Naive thymus-derived CD4-positive, alpha-beta T cell (primary cell): ENCODE measurements at regions of chr16 and their contacts with region 1.

Region 1: DNA sequence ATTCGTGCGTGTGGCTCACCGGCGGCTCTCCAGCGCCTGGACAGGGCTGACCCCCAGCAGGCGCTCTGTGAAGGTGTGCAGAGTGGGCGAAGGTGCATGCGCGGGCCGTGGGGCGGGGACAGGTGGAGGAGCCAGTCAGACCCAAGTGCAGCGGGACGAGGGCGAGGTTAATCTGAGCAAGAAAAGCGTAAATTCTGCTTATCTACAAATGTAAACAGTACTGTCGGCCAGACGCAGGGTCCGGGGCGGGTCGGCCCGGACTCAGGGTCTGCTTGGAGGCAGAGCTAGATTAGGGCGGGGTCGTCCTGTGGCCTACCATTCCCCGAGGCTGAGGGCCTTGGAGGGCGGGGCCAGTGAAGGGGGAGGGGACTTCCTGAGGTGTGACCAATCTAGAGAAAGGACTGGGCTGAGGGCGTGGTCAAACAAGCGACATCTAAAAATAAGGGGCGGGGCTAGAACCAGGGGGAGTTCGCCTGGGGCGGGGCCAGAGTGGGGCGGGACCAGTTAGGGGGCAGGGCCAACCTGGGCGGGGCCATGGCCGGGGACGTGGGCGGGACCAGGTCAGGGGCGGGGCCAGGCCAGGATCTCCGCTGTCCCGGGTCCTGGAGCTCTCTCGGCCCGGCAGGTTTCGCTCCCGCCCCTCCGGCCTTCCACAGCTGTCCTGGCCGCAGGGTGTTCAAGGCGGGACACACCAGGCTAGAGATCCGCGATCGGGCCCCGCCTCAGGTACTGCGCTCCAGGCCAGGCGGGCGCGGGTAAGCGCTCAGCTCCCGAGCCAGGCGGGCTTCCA is at the start of gene SEC14L5:
- DNase-seq: peak; percentile 87 to 96 (median 89)
- ATAC-seq: peak; percentile 99
- H3K4me3 ChIP-seq: peak within 1 kb of the TSS; percentile 59
- H3K4me3 Mint-ChIP-seq: peak within 1 kb of the TSS; percentile 79 to 96 (median 89)
- H3K27ac ChIP-seq: peak within 1 kb of the TSS; percentile 26
- H3K27ac Mint-ChIP-seq: peak within 1 kb of the TSS in 6 of 9 donors; percentile 30 to 80 (median 53)
- H3K4me1 ChIP-seq: peaks cover 6 to 13% of the 10 kb centered on the region in 2 donors
- H3K4me1 Mint-ChIP-seq: peaks cover 15 to 30% (median 23%) of the 10 kb centered on the region in 7 donors
- H3K27me3 ChIP-seq: peaks cover 0 to 7% of the 10 kb centered on the region in 2 donors
- H3K27me3 Mint-ChIP-seq: peaks cover 10 to 35% (median 31%) of the 10 kb centered on the region in 5 donors
- total RNA-seq, gene SEC14L5: 0.21 to 1.0 TPM in 2 of 5 experiments, not detected in the others

Region 2: GRCh38 chr16:4307215-4308037 is 650.5 kb before region 1 on chr16:
- CTCF ChIA-PET with region 1: interaction called, 3 read pairs
- POLR2A ChIA-PET with region 1: no interaction called
- intact Hi-C with region 1: loop called (anchors 5 kb)
- DNase-seq: peak; percentile 97 to 98 (median 97)
- ATAC-seq: peak; percentile 96
- H3K4me3 ChIP-seq: peak overlapping the region; percentile 94
- H3K4me3 Mint-ChIP-seq: peak overlapping the region; percentile 90 to 98 (median 94)
- H3K27ac ChIP-seq: peak overlapping the region; percentile 90
- H3K27ac Mint-ChIP-seq: peak overlapping the region; percentile 94 to 99 (median 95)
- H3K4me1 ChIP-seq: peaks cover 15 to 17% of the 10 kb centered on the region in 2 donors
- H3K4me1 Mint-ChIP-seq: peaks cover 13 to 30% (median 23%) of the 10 kb centered on the region in 7 donors
- H3K27me3 ChIP-seq: no peaks in the 10 kb centered on the region
- H3K27me3 Mint-ChIP-seq: peaks cover 0 to 2% (median 0%) of the 10 kb centered on the region in 5 donors

Region 3: GRCh38 chr16:4425378-4426020 is 532.4 kb before region 1 on chr16 and contains the start of gene DNAJA3:
- CTCF ChIA-PET with region 1: no interaction called
- POLR2A ChIA-PET with region 1: no interaction called
- intact Hi-C with region 1: loop called in 1 of 2 experiments (anchors 10 kb)
- DNase-seq: peak; percentile 91 to 97 (median 95)
- ATAC-seq: peak; percentile 93
- H3K4me3 ChIP-seq: peak within 1 kb of the TSS; percentile 97
- H3K4me3 Mint-ChIP-seq: peak within 1 kb of the TSS; percentile 92 to 99 (median 98)
- H3K27ac ChIP-seq: peak within 1 kb of the TSS; percentile 95
- H3K27ac Mint-ChIP-seq: peak within 1 kb of the TSS; percentile 99 to 100 (median 100)
- H3K4me1 ChIP-seq: peaks cover 18% of the 10 kb centered on the region in 2 donors
- H3K4me1 Mint-ChIP-seq: peaks cover 26 to 37% (median 31%) of the 10 kb centered on the region in 7 donors
- H3K27me3 ChIP-seq: no peaks in the 10 kb centered on the region
- H3K27me3 Mint-ChIP-seq: peaks cover 0 to 4% (median 0%) of the 10 kb centered on the region in 5 donors
- total RNA-seq, gene DNAJA3: 33.6 to 79.8 (median 70.5) TPM

Region 4: DNA sequence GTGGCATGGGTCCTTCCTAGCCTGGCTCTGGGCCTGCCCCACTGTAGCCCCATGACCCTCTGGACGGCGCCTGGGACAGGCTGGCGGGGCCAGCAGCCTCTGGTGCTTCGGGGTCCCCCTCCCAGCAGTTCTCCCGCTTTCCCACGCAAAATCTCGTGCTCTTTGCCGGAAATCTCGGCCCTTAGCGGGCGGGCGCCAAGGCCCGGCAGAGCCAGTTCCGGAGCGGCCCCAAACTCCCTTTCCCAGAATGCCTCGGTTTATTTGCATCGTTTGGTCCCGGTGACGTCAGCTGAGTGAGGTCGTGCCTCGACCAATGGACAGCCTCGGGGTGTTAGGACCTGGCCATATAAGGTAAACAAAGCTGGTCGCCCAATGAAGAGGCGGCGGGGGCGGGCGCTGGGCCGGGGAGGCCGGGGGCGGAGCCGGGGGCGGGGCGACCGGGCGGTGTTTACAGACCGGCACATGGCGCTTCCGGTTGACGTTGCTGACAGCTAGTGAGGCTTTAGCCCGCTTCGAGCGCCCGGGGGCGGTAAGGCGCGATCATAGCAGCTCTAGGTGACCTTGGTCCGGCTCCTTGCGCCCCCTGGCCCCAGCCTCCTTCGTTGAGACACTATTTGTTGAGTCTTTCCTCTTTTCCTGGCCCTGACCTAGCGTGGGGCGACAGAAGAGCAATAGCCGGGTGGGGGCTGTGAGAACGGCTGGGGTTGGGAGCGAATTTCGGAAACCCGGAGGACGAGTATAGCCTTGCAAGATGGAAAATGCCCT is 341.7 kb before region 1 on chr16:
- CTCF ChIA-PET with region 1: interaction called, 3 read pairs
- POLR2A ChIA-PET with region 1: no interaction called
- intact Hi-C with region 1: loop called in 1 of 2 experiments (anchors 1 kb)
- DNase-seq: peak; percentile 93 to 100 (median 98)
- ATAC-seq: peak; percentile 94
- H3K4me3 ChIP-seq: peak overlapping the region; percentile 95
- H3K4me3 Mint-ChIP-seq: peak overlapping the region; percentile 94 to 99 (median 98)
- H3K27ac ChIP-seq: peak overlapping the region; percentile 98
- H3K27ac Mint-ChIP-seq: peak overlapping the region; percentile 96 to 100 (median 99)
- H3K4me1 ChIP-seq: peaks cover 28 to 37% of the 10 kb centered on the region in 2 donors
- H3K4me1 Mint-ChIP-seq: peaks cover 8 to 43% (median 24%) of the 10 kb centered on the region in 7 donors
- H3K27me3 ChIP-seq: no peaks in the 10 kb centered on the region
- H3K27me3 Mint-ChIP-seq: no peaks in the 10 kb centered on the region

Region 5: DNA sequence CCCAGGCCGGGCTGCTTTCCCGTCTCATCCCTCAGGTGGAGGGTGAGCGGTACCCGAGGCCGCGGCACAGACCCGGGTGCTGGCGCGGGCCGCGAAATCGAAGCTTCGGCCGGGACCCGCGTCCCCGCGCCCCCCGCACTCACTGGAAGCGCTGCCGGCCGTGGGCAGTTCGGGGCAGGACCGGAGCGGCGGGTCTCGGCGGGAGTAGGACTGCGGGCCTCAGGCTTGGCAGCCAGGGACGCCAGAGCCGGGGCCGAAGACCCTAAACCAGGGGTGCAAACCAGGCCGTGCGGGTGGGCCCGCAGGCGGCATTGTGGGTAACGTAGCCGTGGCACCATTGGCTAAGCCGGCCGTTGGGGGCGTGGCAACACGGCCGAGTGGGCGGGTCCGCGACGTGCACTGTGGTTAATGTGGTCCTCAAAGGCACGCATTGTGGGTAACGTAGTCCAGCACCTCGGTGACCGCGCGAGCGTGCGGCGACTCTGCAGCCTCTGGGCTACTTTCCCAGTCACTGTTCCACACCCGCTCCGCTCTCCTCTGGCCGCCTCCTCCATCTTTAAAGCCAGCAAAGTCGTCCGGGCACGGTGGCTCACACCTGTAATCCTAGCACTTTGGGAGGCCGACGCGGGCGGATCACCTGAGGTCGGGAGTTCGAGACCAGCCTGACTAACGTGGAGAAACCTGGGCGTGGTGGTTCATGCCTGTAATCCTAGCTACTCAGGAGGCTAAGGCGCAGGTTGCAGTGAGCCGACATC is 190.9 kb before region 1 on chr16 and contains the start of gene ZNF500:
- CTCF ChIA-PET with region 1: no interaction called
- POLR2A ChIA-PET with region 1: no interaction called
- intact Hi-C with region 1: loop called in 1 of 2 experiments (anchors 2 kb)
- DNase-seq: peak; percentile 90 to 98 (median 92)
- ATAC-seq: peak; percentile 99
- H3K4me3 ChIP-seq: peak within 1 kb of the TSS; percentile 82
- H3K4me3 Mint-ChIP-seq: peak within 1 kb of the TSS; percentile 90 to 94 (median 92)
- H3K27ac ChIP-seq: peak within 1 kb of the TSS; percentile 84
- H3K27ac Mint-ChIP-seq: peak within 1 kb of the TSS; percentile 86 to 96 (median 92)
- H3K4me1 ChIP-seq: peaks cover 17 to 19% of the 10 kb centered on the region in 2 donors
- H3K4me1 Mint-ChIP-seq: peaks cover 24 to 49% (median 34%) of the 10 kb centered on the region in 7 donors
- H3K27me3 ChIP-seq: no peaks in the 10 kb centered on the region
- H3K27me3 Mint-ChIP-seq: no peaks in the 10 kb centered on the region
- total RNA-seq, gene ZNF500: 13.8 to 43.0 (median 24.7) TPM

Region 6: GRCh38 chr16:4915226-4915761 is 42.6 kb before region 1 on chr16:
- CTCF ChIA-PET with region 1: no interaction called
- POLR2A ChIA-PET with region 1: no interaction called
- intact Hi-C with region 1: no loop called
- DNase-seq: no peak
- ATAC-seq: no peak
- H3K4me3 ChIP-seq: no peak overlapping the region
- H3K4me3 Mint-ChIP-seq: no peak overlapping the region
- H3K27ac ChIP-seq: no peak overlapping the region
- H3K27ac Mint-ChIP-seq: peak overlapping the region in 1 of 9 donors; percentile 33
- H3K4me1 ChIP-seq: no peaks in the 10 kb centered on the region
- H3K4me1 Mint-ChIP-seq: no peaks in the 10 kb centered on the region
- H3K27me3 ChIP-seq: no peaks in the 10 kb centered on the region
- H3K27me3 Mint-ChIP-seq: no peaks in the 10 kb centered on the region

Region 7: DNA sequence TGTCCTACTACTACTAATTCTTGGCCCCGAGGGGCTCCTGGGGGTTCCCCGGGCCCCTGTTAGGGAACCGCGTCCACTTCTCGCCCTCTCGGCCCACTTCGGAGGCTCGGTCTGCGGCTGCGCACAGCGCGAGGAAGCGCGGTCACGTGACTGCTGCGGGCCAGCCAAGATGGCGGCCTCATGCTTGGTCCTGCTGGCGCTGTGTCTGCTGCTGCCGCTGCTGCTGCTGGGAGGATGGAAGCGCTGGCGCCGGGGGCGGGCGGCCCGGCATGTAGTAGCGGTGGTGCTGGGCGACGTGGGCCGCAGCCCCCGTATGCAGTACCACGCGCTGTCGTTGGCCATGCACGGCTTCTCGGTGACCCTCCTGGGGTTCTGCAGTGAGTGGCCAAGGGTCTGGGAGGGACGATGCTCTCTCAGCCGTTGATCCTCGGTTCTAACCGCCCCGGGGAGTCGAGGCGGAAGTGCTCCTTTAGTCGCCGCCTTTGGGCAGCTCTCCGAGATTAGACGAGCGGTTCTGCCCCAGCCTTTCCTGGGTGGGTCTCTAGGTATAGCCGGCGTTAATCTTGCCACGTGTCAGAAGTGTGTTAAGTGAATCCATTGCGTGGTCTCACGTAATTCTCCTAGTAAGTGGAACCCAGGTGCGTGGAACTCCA is 113.9 kb after region 1 on chr16 and contains the start of gene ALG1:
- CTCF ChIA-PET with region 1: no interaction called
- POLR2A ChIA-PET with region 1: no interaction called
- intact Hi-C with region 1: loop called in 1 of 2 experiments (anchors 5 kb)
- DNase-seq: peak; percentile 80 to 91 (median 87)
- ATAC-seq: peak; percentile 95
- H3K4me3 ChIP-seq: peak within 1 kb of the TSS; percentile 92
- H3K4me3 Mint-ChIP-seq: peak within 1 kb of the TSS; percentile 82 to 98 (median 95)
- H3K27ac ChIP-seq: peak within 1 kb of the TSS; percentile 77
- H3K27ac Mint-ChIP-seq: peak within 1 kb of the TSS; percentile 92 to 99 (median 96)
- H3K4me1 ChIP-seq: peaks cover 15 to 17% of the 10 kb centered on the region in 2 donors
- H3K4me1 Mint-ChIP-seq: peaks cover 23 to 44% (median 32%) of the 10 kb centered on the region in 7 donors
- H3K27me3 ChIP-seq: no peaks in the 10 kb centered on the region
- H3K27me3 Mint-ChIP-seq: peaks cover 0 to 3% (median 0%) of the 10 kb centered on the region in 5 donors
- total RNA-seq, gene ALG1: 12.9 to 29.1 (median 22.1) TPM

Region 8: GRCh38 chr16:5604770-5605169 is 646.9 kb after region 1 on chr16:
- CTCF ChIA-PET with region 1: no interaction called
- POLR2A ChIA-PET with region 1: no interaction called
- intact Hi-C with region 1: no loop called
- DNase-seq: no peak
- ATAC-seq: no peak
- H3K4me3 ChIP-seq: no peak overlapping the region
- H3K4me3 Mint-ChIP-seq: no peak overlapping the region
- H3K27ac ChIP-seq: no peak overlapping the region
- H3K27ac Mint-ChIP-seq: no peak overlapping the region
- H3K4me1 ChIP-seq: no peaks in the 10 kb centered on the region
- H3K4me1 Mint-ChIP-seq: no peaks in the 10 kb centered on the region
- H3K27me3 ChIP-seq: no peaks in the 10 kb centered on the region
- H3K27me3 Mint-ChIP-seq: peaks cover 0 to 4% (median 0%) of the 10 kb centered on the region in 5 donors